ENCODE measurements at regions of chr7 and their contacts with region 1.

Region 1: GRCh38 chr7:142880876-142881505 is 4.6 kb downstream of the TRPV6 start:
- DNase-seq: peak; percentile 61
- H3K4me3 Mint-ChIP-seq: no peak overlapping the region
- H3K27ac Mint-ChIP-seq: no peak overlapping the region
- H3K4me1 Mint-ChIP-seq: no peaks in the 10 kb centered on the region
- H3K27me3 Mint-ChIP-seq: peaks cover 68% of the 10 kb centered on the region
- CTCF ChIP-seq: peak; percentile 84

Region 2: GRCh38 chr7:142853739-142854371 is 27.1 kb before region 1 on chr7:
- CTCF ChIA-PET with region 1: interaction called, 10 read pairs
- POLR2A ChIA-PET with region 1: interaction called, 5 read pairs
- intact Hi-C with region 1: no loop called
- DNase-seq: peak; percentile 76
- H3K4me3 Mint-ChIP-seq: peak overlapping the region; percentile 82
- H3K27ac Mint-ChIP-seq: peak overlapping the region; percentile 55
- H3K4me1 Mint-ChIP-seq: peaks cover 29% of the 10 kb centered on the region
- H3K27me3 Mint-ChIP-seq: peaks cover 51% of the 10 kb centered on the region
- CTCF ChIP-seq: peak; percentile 88

Region 3: DNA sequence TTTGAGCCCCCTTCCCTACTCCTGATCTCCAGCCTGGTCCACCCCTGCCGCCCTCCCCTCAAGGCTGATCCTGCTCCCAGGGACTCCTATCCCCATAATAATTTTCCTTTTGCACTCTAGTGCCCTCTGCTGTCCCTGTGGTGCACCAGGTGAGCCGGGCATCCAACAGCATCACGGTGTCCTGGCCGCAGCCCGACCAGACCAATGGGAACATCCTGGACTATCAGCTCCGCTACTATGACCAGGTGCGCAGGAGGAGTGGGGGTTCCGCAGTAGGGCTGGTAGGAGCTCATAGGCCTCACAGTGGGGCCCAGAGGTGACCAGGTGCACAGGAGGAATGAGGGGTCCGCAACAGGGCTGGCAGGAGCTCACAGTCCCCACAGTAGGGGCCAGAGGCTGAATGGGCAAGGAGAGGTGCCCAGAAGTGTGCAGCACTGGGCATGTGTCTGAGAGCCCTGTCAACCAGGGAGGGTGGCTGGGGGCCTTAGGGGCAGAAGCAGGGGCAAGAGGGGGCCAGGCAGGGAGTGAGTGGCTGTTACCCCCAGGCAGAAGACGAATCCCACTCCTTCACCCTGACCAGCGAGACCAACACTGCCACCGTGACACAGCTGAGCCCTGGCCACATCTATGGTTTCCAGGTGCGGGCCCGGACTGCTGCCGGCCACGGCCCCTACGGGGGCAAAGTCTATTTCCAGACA is 14.5 kb before region 1 on chr7:
- CTCF ChIA-PET with region 1: interaction called, 86 read pairs
- POLR2A ChIA-PET with region 1: no interaction called
- intact Hi-C with region 1: no loop called
- DNase-seq: peak; percentile 73
- H3K4me3 Mint-ChIP-seq: no peak overlapping the region
- H3K27ac Mint-ChIP-seq: no peak overlapping the region
- H3K4me1 Mint-ChIP-seq: peaks cover 5% of the 10 kb centered on the region
- H3K27me3 Mint-ChIP-seq: peaks cover 22% of the 10 kb centered on the region
- CTCF ChIP-seq: peak; percentile 61

Region 4: DNA sequence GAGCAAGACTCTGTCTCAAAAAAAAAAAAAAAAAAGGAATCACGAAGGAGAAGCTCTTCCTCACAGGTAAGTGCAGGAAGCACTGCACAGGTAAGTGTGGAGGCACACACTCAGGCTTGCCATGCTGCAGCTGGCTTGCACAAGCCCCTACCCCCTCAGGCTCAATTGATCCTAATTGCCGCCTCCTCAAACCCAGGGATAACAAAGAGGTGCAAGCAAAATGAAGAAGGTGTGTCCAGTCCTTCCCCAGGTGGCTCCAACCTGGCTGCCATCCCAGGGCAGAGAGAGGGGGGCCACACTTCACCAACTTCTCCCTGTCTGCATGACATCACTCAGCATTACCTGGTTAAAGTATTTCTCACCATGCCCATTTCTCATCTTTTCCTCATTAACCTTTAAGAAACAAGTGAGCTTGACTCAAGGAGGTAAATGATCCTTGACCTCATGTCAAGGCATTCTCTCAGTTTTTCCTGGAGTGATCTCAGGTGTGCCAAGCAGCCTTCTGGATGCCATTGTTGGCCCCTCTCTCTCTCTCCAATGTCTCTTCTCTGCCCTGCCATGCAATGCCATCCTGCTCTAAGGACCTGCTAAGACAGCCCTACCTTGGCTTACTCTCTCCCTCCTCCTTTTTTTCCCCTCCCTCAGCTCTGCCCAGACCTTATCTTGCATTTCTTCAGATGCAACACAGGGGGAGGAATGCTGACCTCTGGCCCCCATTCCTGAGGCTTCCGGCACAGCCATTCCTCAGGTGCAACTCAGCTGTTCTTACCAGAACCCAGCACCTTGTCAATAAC is 17.6 kb after region 1 on chr7:
- CTCF ChIA-PET with region 1: interaction called, 22 read pairs
- POLR2A ChIA-PET with region 1: no interaction called
- intact Hi-C with region 1: no loop called
- DNase-seq: peak; percentile 62
- H3K4me3 Mint-ChIP-seq: no peak overlapping the region
- H3K27ac Mint-ChIP-seq: no peak overlapping the region
- H3K4me1 Mint-ChIP-seq: no peaks in the 10 kb centered on the region
- H3K27me3 Mint-ChIP-seq: peaks cover 76% of the 10 kb centered on the region
- CTCF ChIP-seq: no peak

Region 5: GRCh38 chr7:142960955-142961512 is 80.0 kb after region 1 on chr7:
- CTCF ChIA-PET with region 1: interaction called, 10 read pairs
- POLR2A ChIA-PET with region 1: no interaction called
- intact Hi-C with region 1: no loop called
- DNase-seq: peak; percentile 37
- H3K4me3 Mint-ChIP-seq: no peak overlapping the region
- H3K27ac Mint-ChIP-seq: no peak overlapping the region
- H3K4me1 Mint-ChIP-seq: no peaks in the 10 kb centered on the region
- H3K27me3 Mint-ChIP-seq: peaks cover 55% of the 10 kb centered on the region
- CTCF ChIP-seq: no peak

Region 6: DNA sequence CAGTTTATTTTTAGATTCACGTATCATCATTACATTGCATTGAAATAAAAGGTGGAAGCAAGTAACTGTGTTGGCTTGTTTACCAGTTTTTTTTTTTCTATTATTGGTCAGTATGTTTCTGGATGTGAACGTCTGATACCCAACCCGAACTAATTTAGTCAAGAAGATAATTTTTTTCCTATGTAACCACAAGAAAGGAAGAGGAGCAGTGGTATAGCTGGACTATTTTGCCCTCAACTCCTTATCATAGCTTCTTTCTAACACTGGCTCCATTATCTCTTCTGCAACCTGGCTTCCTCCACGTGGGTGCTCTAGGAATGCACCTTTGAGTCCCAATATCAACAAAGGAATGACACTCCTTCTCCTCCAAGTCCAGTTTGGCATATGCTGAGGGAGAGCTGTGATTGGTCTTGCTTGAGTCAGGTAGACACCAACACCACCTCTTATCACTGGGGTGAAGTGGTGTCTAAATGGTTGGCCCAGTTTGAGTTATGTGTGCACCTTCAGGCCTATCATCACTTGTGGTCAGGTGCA is 116.5 kb after region 1 on chr7:
- CTCF ChIA-PET with region 1: interaction called, 127 read pairs
- POLR2A ChIA-PET with region 1: interaction called, 3 read pairs
- intact Hi-C with region 1: loop called (anchors 10 kb)
- DNase-seq: no peak
- H3K4me3 Mint-ChIP-seq: no peak overlapping the region
- H3K27ac Mint-ChIP-seq: no peak overlapping the region
- H3K4me1 Mint-ChIP-seq: no peaks in the 10 kb centered on the region
- H3K27me3 Mint-ChIP-seq: peaks cover 48% of the 10 kb centered on the region
- CTCF ChIP-seq: no peak

Measured in MCF 10A (cell line).